Psoas muscle (tissue), 8 donors: ENCODE measurements at regions of chr20 and their contacts with region 1.

Region 1: GRCh38 chr20:19347943-19348456 is 135.6 kb downstream of the SLC24A3 start:
- DNase-seq: peak in 1 of 2 donors; percentile 60
- ATAC-seq: peak; percentile 69 to 84 (median 81)
- H3K4me3 ChIP-seq: peak overlapping the region; percentile 47
- H3K27ac ChIP-seq: peak overlapping the region; percentile 82
- H3K4me1 ChIP-seq: peaks cover 35% of the 10 kb centered on the region
- H3K27me3 ChIP-seq: no peaks in the 10 kb centered on the region
- CTCF ChIP-seq: no peak

Region 2: GRCh38 chr20:19368351-19368750 is 20.4 kb after region 1 on chr20:
- intact Hi-C with region 1: no loop called
- DNase-seq: no peak
- ATAC-seq: no peak
- H3K4me3 ChIP-seq: no peak overlapping the region
- H3K27ac ChIP-seq: no peak overlapping the region
- H3K4me1 ChIP-seq: peaks cover 8% of the 10 kb centered on the region
- H3K27me3 ChIP-seq: no peaks in the 10 kb centered on the region
- CTCF ChIP-seq: no peak

Region 3: GRCh38 chr20:19433371-19434350 is 85.7 kb after region 1 on chr20:
- intact Hi-C with region 1: loop called in 1 of 2 experiments (anchors 5 kb)
- DNase-seq: no peak
- ATAC-seq: no peak
- H3K4me3 ChIP-seq: no peak overlapping the region
- H3K27ac ChIP-seq: no peak overlapping the region
- H3K4me1 ChIP-seq: peaks cover 19% of the 10 kb centered on the region
- H3K27me3 ChIP-seq: no peaks in the 10 kb centered on the region
- CTCF ChIP-seq: no peak

Region 4: DNA sequence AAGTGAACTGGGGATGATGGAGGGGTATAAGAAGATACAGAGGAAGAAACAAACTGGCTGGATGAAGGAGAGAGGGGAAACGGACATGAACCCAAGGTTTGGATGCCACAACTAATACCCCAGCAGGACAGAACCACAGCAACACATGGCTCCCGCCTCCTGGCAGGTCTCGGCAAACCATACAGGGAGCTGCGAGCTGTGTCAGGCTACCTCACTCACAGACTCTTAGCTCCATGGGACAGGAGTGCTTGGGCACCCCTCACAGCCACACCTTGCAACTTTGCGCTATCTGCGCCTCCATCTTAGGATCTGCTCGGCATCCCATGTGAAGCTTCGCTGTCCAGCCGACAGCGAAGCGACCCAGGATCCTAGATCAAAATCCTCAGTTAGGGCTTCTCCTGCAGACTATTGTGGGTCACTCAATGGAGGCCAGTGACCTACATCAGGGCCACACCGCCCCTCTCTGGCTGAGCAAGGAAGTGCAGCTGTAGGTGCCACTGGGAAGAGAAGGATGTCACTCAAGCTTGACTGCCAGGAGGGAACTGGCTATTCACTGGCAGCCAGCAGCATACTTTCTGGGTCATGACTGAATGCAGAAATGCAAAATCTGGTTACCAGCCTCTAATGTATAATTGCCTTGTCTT is 235.7 kb after region 1 on chr20:
- intact Hi-C with region 1: loop called in 1 of 2 experiments (anchors 10 kb)
- DNase-seq: peak; percentile 59 to 84
- ATAC-seq: peak; percentile 93 to 97 (median 94)
- H3K4me3 ChIP-seq: no peak overlapping the region
- H3K27ac ChIP-seq: no peak overlapping the region
- H3K4me1 ChIP-seq: peaks cover 5% of the 10 kb centered on the region
- H3K27me3 ChIP-seq: no peaks in the 10 kb centered on the region
- CTCF ChIP-seq: peak; percentile 92